Endothelial cell of umbilical vein (primary cell): ENCODE measurements at regions of chr11 and their contacts with region 1.

Region 1: GRCh38 chr11:67468835-67469811 is at the start of gene TMEM134:
- DNase-seq: peak; percentile 88
- H3K4me3 ChIP-seq: peak within 1 kb of the TSS; percentile 64 to 79 (median 73)
- H3K27ac ChIP-seq: peak within 1 kb of the TSS; percentile 37
- H3K4me1 ChIP-seq: peaks cover 14% of the 10 kb centered on the region
- H3K27me3 ChIP-seq: no peaks in the 10 kb centered on the region
- CTCF ChIP-seq: peak; percentile 27 to 65
- POLR2A ChIP-seq: peak; percentile 90
- total RNA-seq, gene TMEM134: 33.4 and 41.6 TPM in 2 replicates

Region 2: GRCh38 chr11:67353317-67354074 is 115.6 kb before region 1 on chr11 and contains the start of gene POLD4:
- CTCF ChIA-PET with region 1: interaction called, 3 read pairs
- POLR2A ChIA-PET with region 1: no interaction called
- dilution Hi-C with region 1: no loop called
- intact Hi-C with region 1: loop called (anchors 2 kb)
- DNase-seq: peak; percentile 97
- H3K4me3 ChIP-seq: peak within 1 kb of the TSS; percentile 19 to 76 (median 53)
- H3K27ac ChIP-seq: peak within 1 kb of the TSS; percentile 78
- H3K4me1 ChIP-seq: peaks cover 47% of the 10 kb centered on the region
- H3K27me3 ChIP-seq: no peaks in the 10 kb centered on the region
- CTCF ChIP-seq: no peak
- POLR2A ChIP-seq: peak; percentile 95
- total RNA-seq, gene POLD4: 50.1 and 66.9 TPM in 2 replicates

Region 3: DNA sequence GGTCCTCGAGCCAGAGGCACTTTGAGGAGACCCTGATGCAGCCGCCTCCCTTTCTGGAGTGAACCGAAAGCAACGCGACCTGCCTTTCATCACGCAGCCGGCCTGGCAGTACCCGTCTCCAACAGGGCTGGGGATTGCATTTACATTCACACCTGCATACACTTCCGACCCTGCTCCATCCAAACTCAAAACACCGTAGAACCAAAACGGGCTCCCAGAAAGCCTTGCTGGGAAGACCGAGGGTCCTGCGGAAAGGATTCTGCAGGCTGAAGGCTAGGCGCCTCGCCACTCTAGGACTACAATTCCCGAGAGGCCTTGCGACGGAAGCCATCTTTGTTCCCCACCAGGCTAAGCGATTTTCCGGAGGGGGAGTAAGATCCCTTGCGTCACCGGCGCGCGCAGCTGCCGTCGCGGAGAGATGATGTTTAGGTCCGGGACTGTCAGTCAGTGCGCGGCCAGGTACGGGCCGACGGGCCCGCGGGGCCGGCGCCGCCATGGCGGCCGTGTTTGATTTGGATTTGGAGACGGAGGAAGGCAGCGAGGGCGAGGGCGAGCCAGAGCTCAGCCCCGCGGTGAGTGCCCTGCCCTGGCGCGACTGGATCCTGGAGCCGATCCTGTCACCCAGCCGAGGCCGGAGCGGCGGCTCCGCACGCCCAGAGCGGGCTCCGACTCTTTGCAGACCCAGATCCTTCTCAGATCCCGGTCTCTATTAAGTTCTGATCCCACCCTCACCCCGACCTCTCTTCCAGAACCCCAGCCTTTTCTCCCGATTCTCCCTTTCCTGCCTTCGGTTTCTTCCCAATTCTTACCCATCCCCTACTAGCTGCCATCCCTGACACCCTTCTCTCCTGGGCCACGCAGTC is 40.8 kb before region 1 on chr11 and contains the start of gene RPS6KB2:
- CTCF ChIA-PET with region 1: no interaction called
- POLR2A ChIA-PET with region 1: no interaction called
- dilution Hi-C with region 1: no loop called
- intact Hi-C with region 1: loop called (anchors 2 kb)
- DNase-seq: peak; percentile 98
- H3K4me3 ChIP-seq: peak within 1 kb of the TSS; percentile 46 to 91 (median 75)
- H3K27ac ChIP-seq: peak within 1 kb of the TSS; percentile 38
- H3K4me1 ChIP-seq: no peaks in the 10 kb centered on the region
- H3K27me3 ChIP-seq: no peaks in the 10 kb centered on the region
- CTCF ChIP-seq: no peak
- POLR2A ChIP-seq: peak; percentile 96
- total RNA-seq, gene RPS6KB2: 47.8 and 53.8 TPM in 2 replicates

Region 4: GRCh38 chr11:67452141-67452952 is 16.8 kb before region 1 on chr11 and contains the start of gene GPR152:
- CTCF ChIA-PET with region 1: interaction called, 10 read pairs
- POLR2A ChIA-PET with region 1: no interaction called
- dilution Hi-C with region 1: no loop called
- intact Hi-C with region 1: no loop called
- DNase-seq: peak; percentile 32
- H3K4me3 ChIP-seq: peak within 1 kb of the TSS in 2 of 3 experiments; percentile 26 to 32
- H3K27ac ChIP-seq: no peak within 1 kb of the TSS
- H3K4me1 ChIP-seq: peaks cover 7% of the 10 kb centered on the region
- H3K27me3 ChIP-seq: no peaks in the 10 kb centered on the region
- CTCF ChIP-seq: peak; percentile 17 to 47
- POLR2A ChIP-seq: no peak
- total RNA-seq, gene GPR152: not detected in 2 replicates

Region 5: DNA sequence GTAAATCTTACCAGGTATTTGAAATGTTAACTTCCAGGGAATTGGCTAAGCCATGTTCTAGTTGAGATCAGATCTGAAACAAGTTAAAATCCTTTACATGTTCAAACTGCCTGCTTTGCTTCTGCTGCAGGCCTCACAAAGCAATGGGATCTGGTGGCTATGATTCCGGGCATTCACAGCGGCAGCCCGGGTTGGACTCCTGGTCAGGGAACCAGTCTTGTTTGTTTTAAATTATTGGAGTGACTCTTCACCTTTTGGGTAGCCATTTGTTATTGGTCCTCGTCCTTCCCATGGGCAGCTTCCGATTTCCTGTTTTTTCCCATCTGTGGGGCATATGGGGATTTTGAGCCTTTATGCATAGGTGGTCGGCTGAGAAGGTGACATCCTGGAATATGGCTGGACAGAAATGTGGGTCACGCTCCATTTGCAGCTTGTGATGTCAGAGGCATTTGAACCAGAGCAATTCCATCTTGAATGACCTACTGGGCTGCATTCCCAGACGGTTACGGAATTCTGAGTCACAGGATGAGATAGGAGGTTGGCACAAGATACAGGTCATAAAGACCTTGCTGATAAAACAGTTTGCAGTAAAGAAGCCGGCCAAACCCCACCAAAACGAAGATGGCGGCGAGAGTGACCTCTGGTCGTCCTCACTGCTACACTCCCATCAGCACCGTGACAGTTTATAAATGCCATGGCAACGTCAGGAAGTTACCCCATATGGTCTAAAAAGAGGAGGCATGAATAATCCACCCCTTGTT is 94.4 kb after region 1 on chr11:
- CTCF ChIA-PET with region 1: no interaction called
- POLR2A ChIA-PET with region 1: no interaction called
- dilution Hi-C with region 1: no loop called
- intact Hi-C with region 1: loop called (anchors 5 kb)
- DNase-seq: peak; percentile 94
- H3K4me3 ChIP-seq: no peak overlapping the region
- H3K27ac ChIP-seq: peak overlapping the region; percentile 94
- H3K4me1 ChIP-seq: peaks cover 15% of the 10 kb centered on the region
- H3K27me3 ChIP-seq: no peaks in the 10 kb centered on the region
- CTCF ChIP-seq: no peak
- POLR2A ChIP-seq: peak; percentile 40

Region 6: GRCh38 chr11:68020575-68020974 is 551.5 kb after region 1 on chr11:
- CTCF ChIA-PET with region 1: no interaction called
- POLR2A ChIA-PET with region 1: no interaction called
- dilution Hi-C with region 1: no loop called
- intact Hi-C with region 1: no loop called
- DNase-seq: peak; percentile 28
- H3K4me3 ChIP-seq: no peak overlapping the region
- H3K27ac ChIP-seq: no peak overlapping the region
- H3K4me1 ChIP-seq: no peaks in the 10 kb centered on the region
- H3K27me3 ChIP-seq: no peaks in the 10 kb centered on the region
- CTCF ChIP-seq: peak; percentile 28 to 59
- POLR2A ChIP-seq: no peak